ENCODE measurements at regions of chr5 and their contacts with region 1.

Region 1: DNA sequence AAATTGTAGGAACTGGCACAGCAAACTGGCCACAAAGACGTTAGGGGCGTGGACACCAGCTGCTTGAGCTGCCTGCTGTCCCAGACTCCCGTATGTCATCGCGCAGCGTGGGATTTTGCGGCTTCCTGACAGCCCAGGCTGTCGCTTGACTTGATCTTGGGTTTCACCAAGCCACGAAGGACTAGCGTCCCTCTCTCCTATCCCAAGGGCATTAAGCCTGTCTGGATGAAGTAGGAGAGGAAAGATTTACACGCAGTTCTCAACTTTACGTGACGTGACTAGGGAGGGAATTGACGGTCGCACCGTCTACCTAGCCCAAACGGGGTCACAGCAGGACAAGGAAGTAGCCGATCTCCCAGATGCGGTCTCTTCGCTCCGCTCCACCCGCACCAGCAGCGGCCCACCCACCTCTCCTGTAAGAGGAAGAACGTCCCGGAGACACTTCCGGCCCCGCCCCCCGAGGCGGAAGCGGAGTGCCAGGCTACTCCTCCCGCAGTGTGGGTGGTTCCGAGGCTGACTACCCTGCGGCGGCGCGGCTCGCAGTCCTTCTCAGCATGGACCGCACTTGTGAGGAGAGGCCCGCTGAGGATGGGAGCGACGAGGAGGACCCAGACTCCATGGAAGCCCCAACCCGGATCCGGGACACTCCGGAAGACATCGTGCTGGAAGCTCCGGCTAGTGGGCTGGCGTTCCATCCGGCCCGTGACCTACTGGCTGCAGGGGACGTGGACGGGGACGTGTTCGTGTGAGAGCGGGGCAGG is at the start of gene WDR55:
- DNase-seq: peak; percentile 88
- H3K4me3 ChIP-seq: peak within 1 kb of the TSS; percentile 73 to 93 (median 81)
- H3K27ac ChIP-seq: peak within 1 kb of the TSS; percentile 73
- H3K4me1 ChIP-seq: peaks cover 3% of the 10 kb centered on the region
- H3K27me3 ChIP-seq: no peaks in the 10 kb centered on the region
- CTCF ChIP-seq: no peak
- POLR2A ChIP-seq: peak; percentile 94
- total RNA-seq, gene WDR55: 24.0 and 25.3 TPM in 2 replicates

Region 2: DNA sequence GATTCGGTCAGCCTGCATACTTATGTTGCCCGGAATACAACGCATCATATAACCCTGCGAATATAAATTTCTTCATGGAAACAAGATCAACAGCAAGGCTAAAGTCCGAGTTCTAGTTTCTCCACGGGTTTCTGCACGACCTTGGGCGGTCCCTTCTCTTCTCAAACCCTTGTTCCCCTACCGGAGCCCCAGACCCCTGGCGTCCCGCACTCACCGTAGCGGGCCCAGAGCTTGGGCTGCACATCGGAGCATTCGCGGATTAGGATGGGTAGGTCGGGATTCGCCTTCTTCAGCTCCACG is 17.5 kb before region 1 on chr5:
- CTCF ChIA-PET with region 1: interaction called, 5 read pairs
- POLR2A ChIA-PET with region 1: interaction called, 5 read pairs
- dilution Hi-C with region 1: no loop called
- intact Hi-C with region 1: loop called (anchors 1 kb)
- DNase-seq: peak; percentile 10
- H3K4me3 ChIP-seq: peak overlapping the region; percentile 65 to 90 (median 76)
- H3K27ac ChIP-seq: peak overlapping the region; percentile 21
- H3K4me1 ChIP-seq: peaks cover 13% of the 10 kb centered on the region
- H3K27me3 ChIP-seq: no peaks in the 10 kb centered on the region
- CTCF ChIP-seq: no peak
- POLR2A ChIP-seq: no peak

Region 3: GRCh38 chr5:140700177-140701144 is 35.9 kb after region 1 on chr5 and contains the start of gene ZMAT2:
- CTCF ChIA-PET with region 1: no interaction called
- POLR2A ChIA-PET with region 1: no interaction called
- dilution Hi-C with region 1: no loop called
- intact Hi-C with region 1: loop called (anchors 2 kb)
- DNase-seq: peak; percentile 99
- H3K4me3 ChIP-seq: peak within 1 kb of the TSS; percentile 62 to 90 (median 74)
- H3K27ac ChIP-seq: peak within 1 kb of the TSS; percentile 49
- H3K4me1 ChIP-seq: peaks cover 12% of the 10 kb centered on the region
- H3K27me3 ChIP-seq: no peaks in the 10 kb centered on the region
- CTCF ChIP-seq: no peak
- POLR2A ChIP-seq: peak; percentile 69
- total RNA-seq, gene ZMAT2: 49.0 and 49.4 TPM in 2 replicates

Measured in endothelial cell of umbilical vein (primary cell).